H1 (cell line): ENCODE measurements at regions of chr1 and their contacts with region 1.

Region 1: DNA sequence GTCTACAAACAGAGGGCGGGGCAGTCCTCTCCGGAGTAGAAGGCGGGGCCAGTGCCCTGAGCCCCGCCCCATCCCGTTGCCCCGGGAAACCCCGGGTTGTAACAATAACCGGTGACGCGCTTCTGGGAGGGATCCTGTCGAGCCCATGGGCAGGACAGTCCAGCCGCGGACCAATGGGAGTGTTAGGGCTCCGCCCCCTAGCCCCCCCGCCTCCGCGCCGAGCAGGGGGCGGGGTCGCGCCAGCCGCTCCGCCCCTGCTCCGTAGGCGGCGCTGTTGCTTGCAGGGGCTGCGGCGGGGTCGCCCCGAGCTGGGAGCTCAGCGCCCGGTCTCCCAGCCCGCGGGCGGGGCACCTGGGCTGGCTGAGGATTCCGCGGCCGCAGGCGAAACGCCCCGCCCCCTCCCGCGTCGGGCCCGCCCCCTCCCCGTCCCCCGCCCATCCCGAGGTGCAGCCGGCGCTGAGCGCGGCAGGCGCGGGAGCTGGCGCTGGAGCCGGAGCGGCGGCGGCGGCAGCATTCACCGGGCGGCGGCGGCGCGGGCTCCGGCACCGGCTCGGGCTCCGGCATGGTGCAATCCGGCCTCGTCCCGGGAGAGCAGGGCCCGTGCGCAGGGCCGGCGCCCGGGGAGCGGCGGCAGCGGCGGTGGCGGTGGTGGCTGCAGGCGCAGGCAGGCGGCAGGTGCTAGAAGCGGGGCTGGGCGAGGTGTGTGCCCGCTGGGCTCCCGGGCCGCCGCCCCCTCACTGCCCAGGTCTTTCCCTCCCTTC is at the start of gene FOXO6:
- DNase-seq: peak; percentile 95 to 99
- H3K4me3 ChIP-seq: peak within 1 kb of the TSS; percentile 40 to 67 (median 47)
- H3K27ac ChIP-seq: no peak within 1 kb of the TSS
- H3K4me1 ChIP-seq: peaks cover 3 to 58% (median 42%) of the 10 kb centered on the region in 4 experiments
- H3K27me3 ChIP-seq: peaks cover 21 to 38% (median 36%) of the 10 kb centered on the region in 4 experiments
- CTCF ChIP-seq: peak; percentile 73 to 85 (median 76)
- EP300 ChIP-seq: no peak
- POLR2A ChIP-seq: no peak
- RAD21 ChIP-seq: peak; percentile 68 to 84
- total RNA-seq, gene FOXO6: 3.0 and 3.8 TPM in 2 replicates

Region 2: GRCh38 chr1:41333146-41333784 is 27.9 kb before region 1 on chr1:
- CTCF ChIA-PET with region 1: interaction called, 43 read pairs
- POLR2A ChIA-PET with region 1: interaction called, 3 read pairs
- DNase-seq: peak in 1 of 2 experiments; percentile 23
- H3K4me3 ChIP-seq: no peak overlapping the region
- H3K27ac ChIP-seq: no peak overlapping the region
- H3K4me1 ChIP-seq: peaks cover 0 to 4% (median 4%) of the 10 kb centered on the region in 4 experiments; a peak in 5 of 7 replicates
- H3K27me3 ChIP-seq: no peaks in the 10 kb centered on the region
- CTCF ChIP-seq: no peak
- EP300 ChIP-seq: no peak
- POLR2A ChIP-seq: no peak
- RAD21 ChIP-seq: no peak

Region 3: DNA sequence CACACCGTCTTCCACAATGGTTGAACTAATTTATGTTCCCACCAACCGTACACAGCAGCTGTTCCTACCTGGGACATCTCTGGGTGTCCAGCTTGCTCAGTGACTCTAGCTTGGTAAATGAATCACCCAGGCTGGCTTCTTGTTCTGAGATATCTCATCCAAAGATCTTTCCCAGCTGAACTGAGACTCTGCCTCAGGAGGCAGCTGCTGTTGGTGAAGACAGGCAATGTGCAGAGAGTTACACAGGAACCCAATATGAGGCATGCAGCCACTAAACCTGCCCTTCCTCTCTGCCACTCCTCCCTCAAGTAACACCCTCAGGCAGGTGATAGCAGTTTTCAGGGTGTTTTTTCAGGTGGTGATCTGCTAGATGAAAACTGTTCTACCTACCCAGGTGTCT is 13.9 kb before region 1 on chr1:
- CTCF ChIA-PET with region 1: interaction called, 18 read pairs
- POLR2A ChIA-PET with region 1: interaction called, 3 read pairs
- DNase-seq: peak in 1 of 2 experiments; percentile 10
- H3K4me3 ChIP-seq: no peak overlapping the region
- H3K27ac ChIP-seq: no peak overlapping the region
- H3K4me1 ChIP-seq: peaks cover 0 to 1% (median 0%) of the 10 kb centered on the region in 4 experiments; a peak in 2 of 7 replicates
- H3K27me3 ChIP-seq: peaks cover 0 to 2% (median 0%) of the 10 kb centered on the region in 4 experiments; a peak in 2 of 7 replicates
- CTCF ChIP-seq: no peak
- EP300 ChIP-seq: no peak
- POLR2A ChIP-seq: no peak
- RAD21 ChIP-seq: no peak

Region 4: GRCh38 chr1:41387667-41388091 is 26.5 kb after region 1 on chr1:
- CTCF ChIA-PET with region 1: interaction called, 173 read pairs
- POLR2A ChIA-PET with region 1: interaction called, 10 read pairs
- DNase-seq: peak in 1 of 2 experiments; percentile 77
- H3K4me3 ChIP-seq: peak overlapping the region in 1 of 4 experiments; percentile 21; a peak in 1 of 8 replicates
- H3K27ac ChIP-seq: no peak overlapping the region
- H3K4me1 ChIP-seq: peaks cover 6 to 25% (median 15%) of the 10 kb centered on the region in 4 experiments
- H3K27me3 ChIP-seq: peaks cover 3 to 30% (median 21%) of the 10 kb centered on the region in 4 experiments
- CTCF ChIP-seq: no peak
- EP300 ChIP-seq: peak in 1 of 2 experiments; percentile 18; a peak in 1 of 3 replicates
- POLR2A ChIP-seq: no peak
- RAD21 ChIP-seq: peak in 1 of 2 experiments; percentile 22; a peak in 1 of 4 replicates

Region 5: DNA sequence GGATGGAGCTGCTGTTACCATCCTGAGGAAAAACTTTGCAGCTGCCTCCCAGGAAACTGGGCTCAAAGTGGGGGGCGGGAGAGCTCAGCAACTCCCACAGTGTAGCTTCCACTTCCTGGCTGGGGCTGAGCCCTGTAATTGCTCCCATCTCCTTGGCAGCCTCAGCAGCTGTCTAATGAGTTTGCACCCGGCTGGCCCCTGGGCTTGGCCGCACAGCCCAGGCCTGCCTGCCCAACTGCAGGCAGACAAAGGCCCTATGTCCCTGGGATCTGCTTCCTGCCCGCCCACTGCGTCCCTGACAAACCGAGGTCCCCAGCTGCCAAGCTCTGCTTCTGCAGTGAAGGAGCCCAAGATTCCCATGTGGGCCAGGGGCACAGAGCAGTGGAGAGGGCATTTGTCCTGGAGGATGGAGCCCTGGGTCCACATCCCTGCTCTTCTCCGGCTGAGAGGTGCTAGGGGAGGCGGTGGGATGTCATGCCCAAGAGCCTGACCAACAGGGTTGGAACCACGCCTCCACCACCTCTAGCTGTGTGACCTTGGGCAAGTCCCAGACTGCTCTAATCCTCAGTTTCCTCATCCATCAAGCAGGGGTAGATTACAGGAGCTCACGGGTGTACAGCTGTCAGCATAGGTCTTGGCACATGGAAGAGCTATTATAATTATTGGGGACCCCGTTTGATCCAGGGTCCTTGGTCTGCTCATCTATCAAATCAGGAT is 93.4 kb after region 1 on chr1:
- CTCF ChIA-PET with region 1: no interaction called
- POLR2A ChIA-PET with region 1: no interaction called
- DNase-seq: no peak
- H3K4me3 ChIP-seq: no peak overlapping the region
- H3K27ac ChIP-seq: no peak overlapping the region
- H3K4me1 ChIP-seq: no peaks in the 10 kb centered on the region
- H3K27me3 ChIP-seq: no peaks in the 10 kb centered on the region
- CTCF ChIP-seq: no peak
- EP300 ChIP-seq: no peak
- POLR2A ChIP-seq: no peak
- RAD21 ChIP-seq: no peak

Region 6: DNA sequence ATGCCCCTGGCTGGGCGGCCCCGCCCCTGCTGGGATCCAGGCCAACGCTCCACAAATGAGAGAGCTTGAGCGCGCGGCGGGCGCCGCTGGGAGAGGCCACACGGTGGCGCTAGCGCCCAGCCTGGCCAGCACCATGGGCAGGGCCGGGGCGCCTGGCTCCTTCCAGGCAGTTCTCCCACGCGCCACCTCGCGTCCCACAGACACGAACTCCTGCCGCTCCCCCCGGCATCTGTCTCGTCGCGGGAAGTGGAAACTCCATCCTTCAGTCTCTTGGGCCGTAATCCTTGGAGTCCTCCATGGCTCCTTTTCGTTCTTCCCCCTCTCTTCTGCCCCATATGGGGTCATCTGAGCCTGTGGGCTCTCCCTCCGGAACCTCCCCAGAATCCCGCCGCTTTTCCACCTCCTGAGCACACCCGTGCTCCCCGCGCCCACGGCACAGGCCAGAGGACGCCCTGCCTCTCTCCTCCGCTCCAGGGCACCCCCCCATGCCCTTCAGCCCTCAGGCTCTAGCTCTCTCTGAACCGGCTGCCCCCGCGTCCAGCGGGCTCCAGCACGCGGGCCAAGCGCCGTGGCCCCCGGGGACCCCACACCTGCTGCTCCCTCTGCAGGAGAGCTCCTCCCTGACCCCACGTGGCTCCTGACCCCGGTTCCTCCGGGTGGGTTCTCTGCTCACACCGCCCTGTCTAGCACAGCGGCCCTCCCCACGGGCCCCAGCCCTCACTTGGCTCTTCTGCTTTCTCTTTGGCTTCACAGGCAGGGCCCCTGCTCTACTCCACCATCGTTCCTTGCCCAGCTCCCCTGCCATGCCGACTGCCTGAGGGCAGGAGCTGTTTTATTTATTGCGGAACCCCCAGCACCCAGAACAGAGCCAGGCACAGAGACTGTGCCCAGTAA is 155.2 kb after region 1 on chr1:
- CTCF ChIA-PET with region 1: no interaction called
- POLR2A ChIA-PET with region 1: no interaction called
- DNase-seq: peak; percentile 62 to 99
- H3K4me3 ChIP-seq: peak overlapping the region; percentile 5 to 56 (median 30); a peak in 6 of 8 replicates
- H3K27ac ChIP-seq: no peak overlapping the region
- H3K4me1 ChIP-seq: peaks cover 6 to 8% (median 8%) of the 10 kb centered on the region in 4 experiments
- H3K27me3 ChIP-seq: peaks cover 0 to 9% (median 5%) of the 10 kb centered on the region in 4 experiments; a peak in 5 of 7 replicates
- CTCF ChIP-seq: peak; percentile 87 to 93 (median 88)
- EP300 ChIP-seq: no peak
- POLR2A ChIP-seq: no peak
- RAD21 ChIP-seq: peak; percentile 73 to 77